ENCODE measurements at regions of chr5 and their contacts with region 1.

Region 1: GRCh38 chr5:140295414-140295813 is 7.5 kb downstream of the PFDN1 start:
- DNase-seq: peak in 4 of 5 donors; percentile 55 to 80 (median 73)
- ATAC-seq: peak; percentile 80 to 91 (median 86)
- H3K4me3 ChIP-seq: no peak overlapping the region
- H3K27ac ChIP-seq: peak overlapping the region; percentile 35 to 84 (median 72)
- H3K4me1 ChIP-seq: peaks cover 11 to 88% (median 75%) of the 10 kb centered on the region in 12 donors
- H3K27me3 ChIP-seq: no peaks in the 10 kb centered on the region
- CTCF ChIP-seq: no peak
- POLR2A ChIP-seq: no peak

Region 2: GRCh38 chr5:140251527-140251973 is 43.9 kb before region 1 on chr5:
- intact Hi-C with region 1: loop called in 5 of 10 experiments (anchors 5 to 10 kb)
- DNase-seq: peak in 1 of 5 donors; percentile 41
- ATAC-seq: peak in 3 of 4 donors; percentile 35 to 62 (median 38)
- H3K4me3 ChIP-seq: no peak overlapping the region
- H3K27ac ChIP-seq: peak overlapping the region in 8 of 12 donors; percentile 1 to 76 (median 28)
- H3K4me1 ChIP-seq: peaks cover 4 to 85% (median 60%) of the 10 kb centered on the region in 12 donors
- H3K27me3 ChIP-seq: no peaks in the 10 kb centered on the region
- CTCF ChIP-seq: no peak
- POLR2A ChIP-seq: no peak

Region 3: DNA sequence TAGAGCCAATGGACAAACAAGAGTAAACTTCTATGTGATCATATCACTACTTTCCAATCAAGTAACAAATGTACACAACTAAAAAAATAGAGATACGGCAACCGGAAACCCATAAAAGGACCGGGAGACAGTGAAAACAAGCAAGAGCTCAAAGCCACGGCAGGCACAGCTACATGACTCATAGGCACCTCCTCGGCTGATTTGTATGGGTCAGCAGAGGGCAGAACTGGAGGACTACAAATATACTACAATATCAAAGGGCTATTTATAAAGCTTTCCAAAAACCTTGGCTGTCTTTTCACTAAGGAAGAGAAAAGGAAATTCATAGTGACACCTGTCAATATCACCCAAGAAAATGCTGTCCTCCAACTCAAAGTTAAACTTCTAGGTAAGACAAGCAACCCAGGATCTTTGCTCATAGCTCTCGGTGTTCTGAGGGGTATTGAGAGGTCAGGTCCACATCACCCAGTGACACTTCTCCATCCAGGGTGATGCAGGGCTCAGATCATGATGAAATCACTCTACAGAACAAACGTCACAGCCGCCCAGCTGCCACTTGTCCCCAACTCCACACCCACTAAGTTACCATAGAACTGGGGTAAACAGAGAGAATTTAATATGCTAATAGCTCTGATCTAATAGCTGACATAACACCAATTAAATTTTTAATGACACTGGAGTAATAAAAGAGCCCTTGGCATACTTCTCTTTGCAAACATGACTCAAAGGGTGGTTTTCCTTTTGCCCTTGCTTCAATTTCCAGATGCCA is 33.8 kb before region 1 on chr5:
- intact Hi-C with region 1: loop called in 6 of 10 experiments (anchors 5 to 10 kb)
- DNase-seq: peak in 4 of 5 donors; percentile 70 to 84 (median 82)
- ATAC-seq: peak; percentile 96 to 98 (median 97)
- H3K4me3 ChIP-seq: peak overlapping the region in 3 of 12 donors; percentile 3 to 32 (median 3)
- H3K27ac ChIP-seq: peak overlapping the region; percentile 62 to 87 (median 73)
- H3K4me1 ChIP-seq: peaks cover under 1 to 55% (median 36%) of the 10 kb centered on the region in 12 donors
- H3K27me3 ChIP-seq: no peaks in the 10 kb centered on the region
- CTCF ChIP-seq: peak in 7 of 12 donors; percentile 17 to 52 (median 32)
- POLR2A ChIP-seq: no peak

Region 4: DNA sequence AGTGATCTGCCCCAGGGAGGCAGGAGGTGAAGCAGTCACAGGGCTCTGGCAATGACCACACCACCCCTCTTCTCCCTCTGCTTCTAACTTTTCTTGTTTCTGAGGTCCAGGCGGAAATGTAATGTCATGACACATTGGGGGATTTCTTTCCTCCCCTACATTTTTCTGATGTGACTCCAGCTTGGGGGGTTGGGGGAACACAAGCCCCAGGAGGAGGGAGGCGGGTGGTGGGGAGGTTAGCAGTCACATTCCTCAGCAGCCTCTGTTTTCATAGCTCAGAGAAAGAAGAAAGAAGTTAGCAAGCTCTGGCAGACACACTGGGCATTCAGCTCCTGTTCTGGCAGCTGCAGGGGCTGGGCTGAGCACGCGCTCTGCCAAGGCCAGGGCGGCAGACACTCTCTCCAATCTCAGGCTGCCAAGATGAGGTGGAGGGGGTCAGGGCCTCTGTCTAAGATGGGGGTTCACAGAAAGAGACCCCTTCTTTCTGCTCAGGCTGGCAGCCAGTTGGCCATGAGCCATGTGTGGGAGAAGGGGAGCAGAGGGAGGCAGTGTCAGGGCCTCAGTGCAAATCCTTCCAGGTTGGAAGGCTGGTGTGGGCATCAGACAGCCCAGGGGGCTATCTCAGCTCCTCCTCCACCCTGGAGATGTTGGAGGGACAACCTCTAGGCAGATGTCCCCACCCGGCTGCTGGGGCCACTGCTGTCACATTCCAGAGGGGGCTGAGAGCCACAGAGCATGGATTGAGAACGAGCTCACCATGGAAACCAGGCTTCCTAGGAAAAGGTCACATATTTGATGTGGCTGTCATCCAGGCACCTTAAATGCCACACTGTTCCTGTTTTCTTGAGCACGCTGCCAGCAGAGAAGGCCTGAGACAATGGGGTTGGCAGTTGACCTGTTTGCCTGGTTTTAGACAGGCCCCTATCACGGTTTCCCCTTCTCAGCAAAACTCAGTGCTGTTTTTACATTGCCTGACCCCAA is 27.6 kb after region 1 on chr5:
- intact Hi-C with region 1: no loop called
- DNase-seq: peak in 4 of 5 donors; percentile 42 to 70 (median 58)
- ATAC-seq: peak; percentile 79 to 80 (median 80)
- H3K4me3 ChIP-seq: no peak overlapping the region
- H3K27ac ChIP-seq: peak overlapping the region; percentile 71 to 94 (median 80)
- H3K4me1 ChIP-seq: peaks cover 6 to 79% (median 36%) of the 10 kb centered on the region in 12 donors
- H3K27me3 ChIP-seq: no peaks in the 10 kb centered on the region
- CTCF ChIP-seq: no peak
- POLR2A ChIP-seq: no peak

Region 5: DNA sequence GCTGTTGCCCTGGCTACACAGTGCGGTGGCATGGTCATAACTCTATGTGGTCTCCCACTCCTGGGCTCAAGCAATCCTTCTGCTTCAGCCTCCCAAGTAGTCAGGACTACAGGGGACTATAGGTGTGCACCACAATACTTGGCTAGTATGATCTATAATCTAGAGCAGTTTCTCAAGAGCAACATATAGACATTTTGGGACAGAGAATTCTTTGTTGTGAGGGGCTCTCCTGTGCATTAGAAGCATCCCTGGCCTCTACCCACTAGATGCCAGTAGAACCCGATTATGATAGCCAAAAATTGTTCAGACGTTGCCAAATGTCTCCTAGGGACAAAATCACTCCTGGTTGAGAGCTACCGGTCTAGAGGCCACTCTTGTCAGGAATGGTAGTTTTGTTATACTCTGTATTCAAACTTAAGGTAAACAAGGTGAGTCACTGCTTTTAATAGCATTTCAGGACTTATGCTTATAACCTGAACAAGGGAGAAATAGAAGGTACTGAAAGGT is 113.4 kb after region 1 on chr5:
- intact Hi-C with region 1: no loop called
- DNase-seq: no peak
- ATAC-seq: peak in 3 of 4 donors; percentile 49 to 62 (median 55)
- H3K4me3 ChIP-seq: no peak overlapping the region
- H3K27ac ChIP-seq: no peak overlapping the region
- H3K4me1 ChIP-seq: peaks cover 5 to 62% (median 32%) of the 10 kb centered on the region in 12 donors
- H3K27me3 ChIP-seq: no peaks in the 10 kb centered on the region
- CTCF ChIP-seq: peak in 1 of 12 donors; percentile 9
- POLR2A ChIP-seq: no peak

Region 6: DNA sequence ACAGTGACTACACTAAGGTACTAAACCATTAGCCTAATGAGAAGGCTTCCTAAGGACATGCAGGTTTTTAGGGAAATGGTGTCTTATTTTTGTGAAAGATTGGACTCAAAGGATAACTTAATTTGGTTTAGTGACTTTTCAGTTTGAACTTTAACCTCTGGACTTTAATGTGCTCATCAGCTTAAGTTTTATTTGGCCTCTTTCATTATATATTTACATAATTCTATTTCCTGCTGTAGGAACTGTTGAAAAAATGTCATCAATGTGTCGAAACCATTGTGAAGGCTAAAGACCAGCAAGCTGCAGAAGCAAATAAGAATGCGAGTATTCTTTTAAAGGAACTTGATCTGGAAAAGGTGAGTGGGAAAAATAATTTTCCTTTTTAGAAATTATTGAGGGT is 217.7 kb after region 1 on chr5:
- intact Hi-C with region 1: no loop called
- DNase-seq: no peak
- ATAC-seq: no peak
- H3K4me3 ChIP-seq: no peak overlapping the region
- H3K27ac ChIP-seq: no peak overlapping the region
- H3K4me1 ChIP-seq: no peaks in the 10 kb centered on the region
- H3K27me3 ChIP-seq: no peaks in the 10 kb centered on the region
- CTCF ChIP-seq: no peak
- POLR2A ChIP-seq: no peak

Measured in heart left ventricle (tissue), 16 donors.